Motor neuron (in vitro differentiated cells): ENCODE measurements at regions of chr3 and their contacts with region 1.

Region 1: GRCh38 chr3:45210308-45211041 is 15.6 kb downstream of the TMEM158 start:
- ATAC-seq: peak; percentile 61 to 100 (median 82)
- H3K4me3 ChIP-seq: no peak overlapping the region
- H3K27ac ChIP-seq: no peak overlapping the region
- H3K4me1 ChIP-seq: no peaks in the 10 kb centered on the region

Region 2: DNA sequence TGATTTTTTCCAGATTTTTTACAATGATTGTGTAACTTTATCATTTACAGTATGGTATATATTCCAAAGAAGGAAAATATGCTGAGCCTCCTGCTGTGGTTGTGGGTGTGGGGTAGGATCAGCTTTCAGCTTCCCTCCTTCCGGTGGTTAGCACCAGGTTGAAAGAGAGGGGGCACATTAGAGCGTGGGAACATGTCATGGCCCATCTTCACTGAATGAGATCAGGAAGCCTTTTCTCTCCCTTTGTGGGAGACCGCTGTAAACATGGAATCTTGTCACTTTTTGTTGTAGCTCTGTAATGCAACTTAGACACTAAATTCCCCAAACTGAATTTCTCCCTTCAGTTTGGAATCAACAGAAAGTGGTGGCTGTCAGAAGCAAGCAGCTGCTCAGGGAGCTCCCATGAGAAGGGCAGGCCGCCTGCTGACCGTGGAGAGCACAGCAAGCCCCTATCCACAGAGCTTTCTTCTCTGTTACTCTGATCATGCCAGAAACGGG is 297.4 kb after region 1 on chr3:
- in situ Hi-C with region 1: loop called in 2 of 9 experiments (anchors 10 kb)
- ATAC-seq: peak in 7 of 8 experiments; percentile 3 to 70 (median 33)
- H3K4me3 ChIP-seq: no peak overlapping the region
- H3K27ac ChIP-seq: peak overlapping the region; percentile 71 to 73
- H3K4me1 ChIP-seq: peaks cover 24 to 30% of the 10 kb centered on the region in 2 donors